ENCODE measurements at regions of chr11 and their contacts with region 1.

Region 1: GRCh38 chr11:85941380-85941973 is 86.3 kb downstream of the CCDC83 start:
- DNase-seq: peak; percentile 76
- H3K4me3 Mint-ChIP-seq: no peak overlapping the region
- H3K27ac Mint-ChIP-seq: no peak overlapping the region
- H3K4me1 Mint-ChIP-seq: peaks cover 18% of the 10 kb centered on the region
- H3K27me3 Mint-ChIP-seq: no peaks in the 10 kb centered on the region

Region 2: GRCh38 chr11:85977751-85978160 is 36.3 kb after region 1 on chr11:
- CTCF ChIA-PET with region 1: no interaction called
- intact Hi-C with region 1: no loop called
- DNase-seq: no peak
- H3K4me3 Mint-ChIP-seq: no peak overlapping the region
- H3K27ac Mint-ChIP-seq: no peak overlapping the region
- H3K4me1 Mint-ChIP-seq: peaks cover 11% of the 10 kb centered on the region
- H3K27me3 Mint-ChIP-seq: no peaks in the 10 kb centered on the region

Region 3: GRCh38 chr11:86418917-86419316 is 477.4 kb after region 1 on chr11:
- CTCF ChIA-PET with region 1: interaction called, 3 read pairs
- intact Hi-C with region 1: loop called (anchors 1 kb)
- DNase-seq: peak; percentile 18
- H3K4me3 Mint-ChIP-seq: no peak overlapping the region
- H3K27ac Mint-ChIP-seq: no peak overlapping the region
- H3K4me1 Mint-ChIP-seq: peaks cover 3% of the 10 kb centered on the region
- H3K27me3 Mint-ChIP-seq: no peaks in the 10 kb centered on the region

Region 4: DNA sequence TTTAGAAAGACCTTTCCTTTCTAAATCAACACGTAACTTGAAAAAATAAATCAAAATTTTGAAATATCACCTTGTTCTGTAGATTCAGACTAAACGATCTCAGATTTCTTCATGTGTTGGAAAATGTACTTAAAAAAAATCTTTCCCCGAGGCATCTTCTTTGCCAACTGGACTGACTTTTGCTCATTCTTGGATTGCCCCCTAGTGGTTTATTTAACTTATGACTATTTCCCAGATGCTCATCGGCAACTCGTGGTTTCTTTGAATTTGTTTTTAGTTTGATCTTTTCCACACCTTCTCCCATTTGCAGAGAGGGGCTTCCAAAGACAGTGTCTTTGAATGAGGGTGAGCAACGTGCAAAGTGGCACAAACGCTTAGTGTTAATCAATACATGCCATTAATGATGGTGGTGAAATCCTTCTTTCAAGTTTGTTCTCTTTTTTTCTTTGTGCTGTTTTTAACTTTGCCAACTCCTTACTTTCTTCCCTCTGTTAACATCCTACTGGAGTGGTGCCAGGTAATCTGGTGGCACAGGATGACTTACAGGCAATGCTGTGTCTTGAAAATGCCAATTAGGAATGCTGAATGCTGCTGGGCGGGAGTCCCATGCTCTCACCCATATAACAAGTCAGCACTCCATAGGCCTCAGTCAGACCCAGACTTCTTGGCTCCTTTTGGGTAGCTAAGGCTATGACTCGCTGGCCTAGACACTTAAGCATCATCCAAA is 877.2 kb after region 1 on chr11:
- CTCF ChIA-PET with region 1: no interaction called
- intact Hi-C with region 1: loop called (anchors 1 kb)
- DNase-seq: no peak
- H3K4me3 Mint-ChIP-seq: no peak overlapping the region
- H3K27ac Mint-ChIP-seq: no peak overlapping the region
- H3K4me1 Mint-ChIP-seq: peaks cover 4% of the 10 kb centered on the region
- H3K27me3 Mint-ChIP-seq: peaks cover 21% of the 10 kb centered on the region